Posterior cingulate gyrus (tissue), 11 donors: ENCODE measurements at regions of chr14 and their contacts with region 1.

Region 1: DNA sequence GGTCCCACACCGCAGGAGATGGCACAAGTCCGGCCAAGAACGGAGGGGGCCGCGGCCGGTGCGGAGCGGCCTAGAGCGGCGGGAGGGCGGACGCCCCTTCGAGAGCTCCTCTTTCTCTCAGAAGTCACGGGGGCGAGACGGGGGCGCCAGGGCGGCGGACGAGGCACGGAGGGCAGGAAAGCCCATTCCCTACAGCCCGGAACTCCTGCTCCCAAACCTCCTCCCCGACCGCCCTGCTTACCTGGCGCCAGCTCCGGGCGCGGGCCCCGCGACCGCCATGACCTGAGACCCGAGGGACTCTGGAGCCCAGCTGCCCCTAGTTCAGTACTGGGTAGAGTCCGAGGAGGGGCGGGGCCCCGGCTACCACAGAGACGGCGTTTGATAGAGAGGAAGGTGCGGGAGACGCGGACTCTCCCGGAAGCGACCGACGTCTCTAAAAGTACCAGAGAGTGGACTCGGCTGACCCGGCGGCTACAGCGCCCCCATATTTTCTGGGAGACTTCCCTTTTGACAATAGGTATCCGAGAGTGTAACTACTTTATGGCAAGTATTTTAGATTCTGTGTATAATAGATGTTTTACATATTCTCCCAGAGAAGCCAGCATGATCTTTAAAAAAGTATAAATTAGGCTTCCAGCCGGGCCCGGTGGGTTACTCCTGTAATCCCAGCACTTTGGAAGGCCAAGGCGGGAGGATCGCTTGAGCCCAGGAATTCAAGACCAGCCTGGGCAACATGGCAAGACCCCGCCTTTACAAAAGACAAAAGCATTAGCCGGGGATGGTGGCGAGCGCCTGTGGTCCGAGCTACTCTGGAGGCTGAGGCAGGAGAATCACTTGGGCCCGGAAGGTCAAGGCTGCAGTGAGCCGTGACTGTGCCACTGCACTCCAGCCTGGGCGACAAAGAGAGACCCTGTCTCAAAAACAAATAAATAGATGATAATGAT is at the start of gene ABCD4:
- DNase-seq: peak; percentile 93 to 99 (median 96)

Region 2: DNA sequence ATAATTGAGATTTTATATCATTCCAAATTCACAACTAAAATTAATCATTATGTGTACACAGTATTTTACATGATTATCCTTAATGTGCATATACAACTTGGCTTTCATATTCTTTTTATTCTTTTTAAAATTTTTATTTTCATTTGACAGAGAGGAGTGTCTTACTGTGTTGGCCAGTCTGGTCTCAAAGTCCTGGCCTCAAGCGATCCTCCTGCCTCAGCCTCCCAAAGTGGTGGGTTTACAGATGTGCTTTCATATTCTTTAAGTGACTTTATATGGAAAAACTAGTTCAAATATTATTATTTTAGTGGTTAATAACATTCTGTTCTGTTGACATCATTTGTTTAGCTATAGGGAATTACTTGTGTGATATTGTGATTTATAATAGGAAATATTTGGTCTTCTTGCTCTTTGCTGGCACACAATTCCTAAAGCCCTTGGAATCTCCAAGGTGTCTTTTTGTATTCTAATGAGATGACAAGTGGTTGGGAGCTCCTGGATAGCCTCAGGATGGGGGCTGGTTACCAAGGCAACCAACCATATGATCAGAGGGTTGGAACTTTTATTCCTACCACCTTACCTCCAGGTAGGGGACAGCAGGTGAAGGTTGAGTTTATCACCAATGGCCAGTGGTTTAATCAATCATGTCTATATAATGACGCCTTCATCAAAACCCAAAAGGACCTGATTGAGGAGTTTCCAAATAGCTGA is 432.2 kb before region 1 on chr14:
- intact Hi-C with region 1: no loop called
- DNase-seq: no peak

Region 3: DNA sequence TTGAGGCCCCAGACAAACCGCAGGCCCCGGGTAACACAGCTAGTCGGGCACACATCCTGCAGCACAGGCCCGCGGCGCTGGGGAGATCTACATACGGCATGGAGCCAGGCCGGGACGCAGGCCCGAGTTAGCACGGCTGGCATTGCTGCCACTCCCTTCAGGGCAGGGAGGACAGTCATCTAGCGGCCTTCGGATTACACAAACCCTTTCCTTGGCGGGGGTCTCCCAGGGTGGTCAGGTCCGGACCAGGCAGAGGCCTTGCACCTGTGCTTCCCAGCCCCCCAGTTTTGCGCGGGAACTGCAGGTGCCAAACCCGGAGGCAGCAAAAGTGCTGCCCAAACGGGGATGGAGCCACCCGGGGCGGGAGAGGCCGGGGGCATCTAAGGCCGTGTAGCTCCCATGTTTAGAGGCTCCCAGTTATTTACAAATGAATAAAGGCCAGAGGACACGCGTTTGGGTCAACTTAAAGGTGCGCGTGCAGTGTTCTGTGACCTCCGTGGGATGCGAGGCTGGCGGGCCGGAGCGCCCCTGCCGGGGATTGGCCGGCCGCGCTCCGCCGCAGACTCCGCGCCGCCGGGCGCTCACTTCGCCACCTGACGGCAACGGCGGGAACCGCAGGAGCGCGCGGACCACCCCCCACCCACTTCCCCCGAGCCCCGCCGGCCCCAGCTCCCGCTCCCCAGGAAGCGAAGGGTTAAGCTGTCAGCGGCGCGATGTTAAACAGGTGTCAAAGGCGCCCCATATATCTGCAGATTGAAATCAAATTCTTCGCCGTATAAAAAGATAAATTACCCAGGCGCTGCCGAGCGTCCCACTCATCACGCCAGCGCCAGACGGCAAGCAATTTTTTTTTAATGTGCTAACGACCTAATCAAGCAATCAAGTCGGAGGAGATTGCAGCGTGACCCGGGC is 45.6 kb before region 1 on chr14:
- intact Hi-C with region 1: loop called (anchors 2 kb)
- DNase-seq: peak in 8 of 10 donors; percentile 17 to 91 (median 42)

Region 4: DNA sequence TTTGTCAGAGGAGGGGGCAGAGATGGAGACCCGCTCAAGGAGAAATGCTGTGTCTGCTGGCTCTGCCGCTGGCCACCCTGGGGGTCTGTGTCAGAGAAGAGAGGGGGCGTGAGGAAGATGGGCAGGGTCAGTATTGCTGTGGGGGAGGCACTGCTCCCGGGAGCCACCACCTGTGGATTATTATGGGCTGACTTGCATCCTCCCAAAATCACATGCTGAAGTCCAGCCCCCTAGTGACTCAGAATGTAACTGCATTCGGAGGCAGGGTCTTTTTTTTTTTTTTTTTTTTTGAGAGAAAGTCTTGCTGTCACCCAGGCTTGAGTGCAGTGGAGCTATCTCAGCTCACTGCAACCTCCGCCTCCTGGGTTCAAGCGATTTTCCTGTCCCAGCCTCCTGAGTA is 12.5 kb before region 1 on chr14:
- intact Hi-C with region 1: no loop called
- DNase-seq: no peak